ENCODE measurements at regions of chr16 and their contacts with region 1.

Region 1: GRCh38 chr16:57300387-57301125 is 16.1 kb upstream of the PLLP start:
- DNase-seq: peak; percentile 100
- H3K4me3 Mint-ChIP-seq: no peak overlapping the region
- H3K27ac Mint-ChIP-seq: no peak overlapping the region
- H3K4me1 Mint-ChIP-seq: peaks cover 8% of the 10 kb centered on the region
- H3K27me3 Mint-ChIP-seq: peaks cover 2% of the 10 kb centered on the region

Region 2: GRCh38 chr16:56964243-56965148 is 336.1 kb before region 1 on chr16:
- CTCF ChIA-PET with region 1: interaction called, 5 read pairs
- intact Hi-C with region 1: loop called (anchors 2 kb)
- DNase-seq: peak; percentile 98
- H3K4me3 Mint-ChIP-seq: no peak overlapping the region
- H3K27ac Mint-ChIP-seq: no peak overlapping the region
- H3K4me1 Mint-ChIP-seq: peaks cover 19% of the 10 kb centered on the region
- H3K27me3 Mint-ChIP-seq: no peaks in the 10 kb centered on the region

Region 3: DNA sequence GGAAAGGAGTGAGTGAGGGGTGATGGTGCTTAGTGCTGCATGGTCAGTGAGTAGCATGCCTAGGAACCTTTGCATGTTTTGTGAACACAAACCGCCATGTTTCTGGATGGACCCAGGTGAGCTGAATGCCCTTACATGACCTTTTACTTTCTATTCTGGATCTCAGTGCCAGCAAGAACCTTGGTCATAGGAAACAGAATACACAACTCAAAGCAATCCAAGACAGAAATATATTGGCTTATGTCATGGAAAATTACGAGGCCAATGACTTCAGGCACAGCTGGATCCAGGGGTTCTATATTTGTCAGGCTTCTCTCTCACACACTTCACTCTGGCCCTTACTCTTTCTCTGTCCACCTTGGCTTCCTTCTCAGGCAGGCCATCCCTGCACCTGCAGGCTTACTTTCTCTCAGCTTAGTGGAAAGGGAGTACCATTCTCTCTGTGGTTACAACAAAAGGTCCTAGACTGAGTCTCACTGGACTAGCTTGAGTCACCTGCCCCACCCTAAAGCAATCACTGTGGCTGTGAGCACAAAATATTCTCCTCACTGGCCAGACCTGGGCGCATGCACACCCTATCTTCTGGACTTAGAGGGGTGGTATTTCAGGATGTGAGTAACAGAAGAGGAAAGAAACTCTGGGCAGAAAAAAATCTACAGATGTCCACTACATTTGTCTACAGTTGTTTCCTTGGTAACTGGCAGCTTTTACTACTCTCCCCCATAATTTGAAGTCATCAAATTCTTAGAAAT is 228.5 kb before region 1 on chr16:
- CTCF ChIA-PET with region 1: no interaction called
- intact Hi-C with region 1: no loop called
- DNase-seq: no peak
- H3K4me3 Mint-ChIP-seq: no peak overlapping the region
- H3K27ac Mint-ChIP-seq: peak overlapping the region; percentile 44
- H3K4me1 Mint-ChIP-seq: peaks cover 12% of the 10 kb centered on the region
- H3K27me3 Mint-ChIP-seq: no peaks in the 10 kb centered on the region

Region 4: DNA sequence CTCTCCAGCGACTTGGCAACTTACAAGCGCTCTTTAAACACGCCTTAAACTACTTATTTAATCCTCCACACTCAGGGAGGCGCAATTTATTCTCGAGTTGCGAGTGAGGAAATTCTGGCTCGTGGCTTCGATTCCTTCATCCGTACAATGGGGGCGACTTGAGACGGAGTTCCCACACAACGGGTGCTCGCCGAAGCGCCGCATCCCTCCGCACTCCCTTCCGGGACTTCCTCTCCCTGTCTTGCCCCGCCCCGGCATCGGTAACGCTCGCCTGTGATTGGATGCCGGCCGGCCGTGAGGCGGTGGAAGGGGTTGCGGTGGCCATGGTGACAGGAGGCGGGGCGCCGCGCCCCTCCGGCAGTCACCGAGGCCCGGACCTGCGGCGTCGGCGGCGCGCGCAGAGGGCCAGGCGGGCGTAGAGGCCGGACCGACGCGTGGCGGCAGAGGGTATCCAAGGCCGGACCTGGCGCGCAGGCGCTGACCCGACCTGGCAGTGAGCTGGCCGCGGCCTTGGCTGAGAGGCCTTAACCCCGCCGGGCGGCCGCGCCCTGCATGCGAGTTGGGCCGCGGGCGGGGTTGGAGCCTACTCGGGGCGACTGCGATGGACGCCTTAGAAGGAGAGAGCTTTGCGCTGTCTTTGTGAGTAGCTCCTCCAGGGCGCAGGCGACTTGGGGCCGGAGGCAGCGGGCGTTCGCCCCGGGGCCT is 55.6 kb before region 1 on chr16 and contains the start of gene ARL2BP:
- CTCF ChIA-PET with region 1: interaction called, 3 read pairs
- intact Hi-C with region 1: loop called (anchors 1 kb)
- DNase-seq: peak; percentile 98
- H3K4me3 Mint-ChIP-seq: peak within 1 kb of the TSS; percentile 93
- H3K27ac Mint-ChIP-seq: peak within 1 kb of the TSS; percentile 91
- H3K4me1 Mint-ChIP-seq: peaks cover 16% of the 10 kb centered on the region
- H3K27me3 Mint-ChIP-seq: no peaks in the 10 kb centered on the region
- total RNA-seq, gene ARL2BP: 11.0 to 11.2 TPM

Region 5: DNA sequence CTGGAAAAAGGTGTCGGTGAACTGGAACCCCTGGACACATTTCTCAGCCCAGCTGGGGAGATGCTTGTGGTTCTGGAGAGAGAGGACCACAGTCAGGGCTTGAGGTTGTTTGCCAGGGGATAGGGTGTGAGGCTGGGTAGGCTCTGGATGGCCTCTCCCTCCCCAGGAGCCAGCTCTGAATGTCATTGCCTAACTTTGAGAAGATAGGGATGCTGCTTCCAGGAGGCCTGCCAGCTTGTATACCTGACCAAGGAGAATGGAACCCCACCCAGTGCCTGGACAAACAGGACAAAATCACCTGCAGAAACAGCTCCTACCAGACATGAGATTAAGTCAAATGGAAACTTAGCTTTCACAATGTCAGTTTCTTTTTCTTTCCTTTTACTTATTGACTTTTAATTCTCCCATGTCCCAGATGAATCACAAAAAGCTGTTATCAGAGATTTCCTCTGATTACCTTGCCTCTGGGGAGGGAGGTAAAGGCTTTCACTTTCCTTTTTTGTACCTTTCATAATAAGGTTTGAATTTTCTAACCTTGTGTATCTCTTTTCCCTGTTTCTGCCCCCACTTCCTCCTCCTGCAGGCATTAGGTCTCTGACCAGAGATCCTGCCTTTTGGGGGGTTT is 13.7 kb after region 1 on chr16:
- CTCF ChIA-PET with region 1: interaction called, 10 read pairs
- intact Hi-C with region 1: no loop called
- DNase-seq: no peak
- H3K4me3 Mint-ChIP-seq: no peak overlapping the region
- H3K27ac Mint-ChIP-seq: peak overlapping the region; percentile 13
- H3K4me1 Mint-ChIP-seq: peaks cover 19% of the 10 kb centered on the region
- H3K27me3 Mint-ChIP-seq: no peaks in the 10 kb centered on the region

Region 6: DNA sequence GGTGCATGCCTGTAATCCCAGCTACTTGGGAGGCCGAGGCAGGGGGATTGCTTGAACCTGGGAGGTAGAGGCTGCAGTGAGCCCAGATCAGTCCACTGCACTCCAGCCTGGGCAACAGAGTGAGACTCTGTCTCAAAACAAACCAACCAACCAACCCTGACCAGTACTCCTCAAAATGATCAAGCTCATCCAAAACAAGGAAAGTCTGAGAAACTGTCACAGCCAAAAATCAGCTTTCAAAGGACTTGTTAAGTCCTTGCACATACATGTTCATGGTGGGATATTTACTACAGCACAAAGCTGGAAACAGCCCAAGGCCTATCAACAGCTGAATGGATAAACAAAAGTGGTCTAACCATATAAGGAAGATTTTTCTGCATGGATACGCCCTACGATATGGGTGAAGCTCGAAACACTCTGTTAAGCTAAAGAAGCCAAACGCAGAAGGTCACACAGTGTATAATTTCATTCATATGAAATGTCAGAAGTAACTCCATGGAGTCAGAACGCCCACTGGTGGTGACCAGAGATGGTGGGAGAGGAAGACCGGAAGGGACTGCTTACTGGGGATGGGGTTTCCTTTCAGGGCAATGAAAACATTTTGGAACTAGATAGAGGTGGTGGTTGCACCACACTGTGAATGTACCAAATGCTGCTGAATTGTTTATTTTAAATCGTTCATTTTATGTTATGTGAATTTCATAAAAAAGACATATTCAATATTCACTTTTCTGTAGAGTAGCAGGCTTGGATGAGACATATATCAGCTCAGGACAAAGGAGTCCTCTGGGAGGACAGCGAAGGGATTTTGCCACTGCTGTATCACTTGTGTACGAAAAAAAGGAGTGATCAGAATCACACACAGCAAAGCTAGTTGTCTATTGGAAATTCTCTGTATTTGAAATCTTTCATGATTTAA is 121.7 kb after region 1 on chr16:
- CTCF ChIA-PET with region 1: interaction called, 191 read pairs
- intact Hi-C with region 1: loop called (anchors 1 kb)
- DNase-seq: peak; percentile 33
- H3K4me3 Mint-ChIP-seq: no peak overlapping the region
- H3K27ac Mint-ChIP-seq: no peak overlapping the region
- H3K4me1 Mint-ChIP-seq: peaks cover 11% of the 10 kb centered on the region
- H3K27me3 Mint-ChIP-seq: no peaks in the 10 kb centered on the region

Region 7: DNA sequence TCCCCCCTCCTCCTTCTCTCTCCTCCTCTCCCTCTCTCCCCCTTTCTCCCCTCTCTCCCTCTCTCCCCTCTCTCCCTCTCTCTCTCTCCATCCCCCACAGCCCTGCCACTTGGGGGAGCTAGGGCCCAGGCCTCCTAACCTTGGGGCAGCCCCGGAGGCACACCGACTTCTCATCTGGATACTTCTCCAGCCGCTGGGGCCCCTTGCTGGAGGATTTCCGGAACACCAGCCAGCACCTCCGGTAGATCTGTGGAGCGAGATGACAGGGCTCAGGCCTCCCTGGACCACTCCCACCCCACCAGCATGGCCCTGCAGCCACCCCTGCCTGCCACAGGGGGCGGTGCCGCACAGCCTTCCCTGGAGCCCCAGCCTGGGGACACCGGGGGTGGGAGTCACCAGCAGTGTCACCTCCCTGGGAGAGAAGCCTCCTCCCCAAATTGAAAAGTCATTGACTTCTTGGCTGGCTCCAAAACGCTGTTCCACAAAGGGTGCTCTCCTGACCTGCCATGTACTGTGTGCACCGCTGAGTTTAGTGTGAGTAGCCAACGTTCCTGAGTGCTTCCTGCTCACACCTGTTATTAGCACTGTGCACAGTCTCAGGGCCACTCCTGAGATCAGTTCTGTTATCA is 175.3 kb after region 1 on chr16:
- CTCF ChIA-PET with region 1: interaction called, 4 read pairs
- intact Hi-C with region 1: loop called (anchors 1 kb)
- DNase-seq: peak; percentile 96
- H3K4me3 Mint-ChIP-seq: no peak overlapping the region
- H3K27ac Mint-ChIP-seq: peak overlapping the region; percentile 63
- H3K4me1 Mint-ChIP-seq: peaks cover 22% of the 10 kb centered on the region
- H3K27me3 Mint-ChIP-seq: no peaks in the 10 kb centered on the region

Region 8: DNA sequence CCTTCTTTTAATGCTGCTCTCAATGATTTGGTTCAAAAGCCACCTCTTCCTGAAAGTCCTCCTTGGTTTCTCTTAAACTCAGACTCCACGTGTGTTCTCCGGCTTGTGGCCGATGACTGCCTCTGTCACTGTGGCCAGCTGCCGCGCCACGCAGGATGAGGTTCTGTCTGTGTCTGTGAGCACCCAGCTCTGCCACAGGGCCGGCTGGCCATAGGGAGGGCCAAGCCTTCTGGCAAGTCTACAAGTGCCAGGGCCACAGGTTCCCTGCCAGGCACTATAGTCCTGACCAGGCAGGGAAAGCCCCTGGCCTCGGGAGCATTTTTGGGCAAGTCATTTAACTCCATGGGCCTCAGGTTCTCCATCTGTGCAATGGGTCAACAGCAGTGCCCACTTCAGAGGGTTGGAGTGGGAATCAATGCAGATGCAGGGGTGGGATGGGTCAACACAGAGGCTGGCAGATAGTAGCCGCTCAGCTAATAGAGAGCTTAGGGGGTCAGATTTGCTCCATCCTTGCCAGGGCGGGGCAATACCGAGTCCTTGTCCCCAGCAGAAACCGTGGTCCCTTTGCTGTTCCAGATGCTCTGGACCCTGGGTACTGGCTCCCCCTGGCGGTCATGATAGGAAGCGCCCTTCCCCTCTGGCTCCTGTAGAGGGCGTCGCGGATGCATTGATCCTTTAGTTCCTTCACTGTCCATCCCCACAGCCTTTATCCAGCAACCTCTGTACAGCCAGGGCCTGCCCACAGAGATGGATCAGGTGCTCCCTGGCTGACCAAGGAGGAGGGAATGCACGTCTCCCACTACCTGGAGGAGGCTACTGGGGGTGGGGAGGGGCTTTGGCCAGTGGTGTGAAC is 348.3 kb after region 1 on chr16:
- CTCF ChIA-PET with region 1: no interaction called
- intact Hi-C with region 1: loop called (anchors 2 kb)
- DNase-seq: peak; percentile 93
- H3K4me3 Mint-ChIP-seq: no peak overlapping the region
- H3K27ac Mint-ChIP-seq: peak overlapping the region; percentile 44
- H3K4me1 Mint-ChIP-seq: peaks cover 17% of the 10 kb centered on the region
- H3K27me3 Mint-ChIP-seq: no peaks in the 10 kb centered on the region